ENCODE measurements at regions of chr3 and their contacts with region 1.

Region 1: GRCh38 chr3:187679638-187680396 is 9.6 kb upstream of the SST start:
- DNase-seq: no peak
- ATAC-seq: peak; percentile 97
- H3K4me3 ChIP-seq: no peak overlapping the region
- H3K27ac ChIP-seq: no peak overlapping the region
- H3K4me1 ChIP-seq: no peaks in the 10 kb centered on the region
- H3K27me3 ChIP-seq: no peaks in the 10 kb centered on the region
- CTCF ChIP-seq: peak; percentile 84 to 94 (median 89)
- EP300 ChIP-seq: no peak
- POLR2A ChIP-seq: no peak
- RAD21 ChIP-seq: peak; percentile 91

Region 2: DNA sequence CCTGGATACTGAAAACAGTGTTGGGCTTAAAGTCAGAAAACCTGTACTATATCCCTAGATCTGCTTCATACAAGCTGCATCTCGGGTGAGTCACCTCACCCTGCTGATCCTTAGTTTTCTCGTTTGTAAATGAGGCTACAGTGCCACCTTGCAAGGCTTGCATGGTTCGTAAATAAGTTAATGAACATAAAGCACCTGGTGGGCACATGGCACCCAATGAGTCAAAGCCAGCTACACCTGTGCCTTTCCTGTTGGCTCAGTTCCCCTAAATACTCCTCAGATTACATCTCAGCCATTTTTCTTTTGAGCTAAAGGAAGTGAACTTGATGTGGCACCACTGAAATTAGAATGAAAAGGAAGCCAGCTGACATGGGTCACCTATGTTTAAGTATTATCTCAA is 456.0 kb before region 1 on chr3:
- CTCF ChIA-PET with region 1: interaction called, 41 read pairs
- POLR2A ChIA-PET with region 1: no interaction called
- RAD21 ChIA-PET with region 1: interaction called, 18 read pairs
- SMC1A ChIA-PET with region 1: interaction called, 9 read pairs
- in situ Hi-C with region 1: no loop called
- intact Hi-C with region 1: loop called (anchors 1 kb)
- DNase-seq: no peak
- ATAC-seq: no peak
- H3K4me3 ChIP-seq: no peak overlapping the region
- H3K27ac ChIP-seq: no peak overlapping the region
- H3K4me1 ChIP-seq: no peaks in the 10 kb centered on the region
- H3K27me3 ChIP-seq: peaks cover 0 to 5% of the 10 kb centered on the region in 2 experiments; a peak in 3 of 4 replicates
- CTCF ChIP-seq: no peak
- EP300 ChIP-seq: no peak
- POLR2A ChIP-seq: no peak
- RAD21 ChIP-seq: no peak

Region 3: GRCh38 chr3:187662848-187663409 is 16.9 kb before region 1 on chr3:
- CTCF ChIA-PET with region 1: interaction called, 19 read pairs
- POLR2A ChIA-PET with region 1: no interaction called
- RAD21 ChIA-PET with region 1: interaction called, 3 read pairs
- SMC1A ChIA-PET with region 1: interaction called, 20 read pairs
- in situ Hi-C with region 1: no loop called
- intact Hi-C with region 1: no loop called
- DNase-seq: no peak
- ATAC-seq: no peak
- H3K4me3 ChIP-seq: no peak overlapping the region
- H3K27ac ChIP-seq: no peak overlapping the region
- H3K4me1 ChIP-seq: no peaks in the 10 kb centered on the region
- H3K27me3 ChIP-seq: peaks cover 0 to 6% of the 10 kb centered on the region in 2 experiments; a peak in 2 of 4 replicates
- CTCF ChIP-seq: no peak
- EP300 ChIP-seq: no peak
- POLR2A ChIP-seq: no peak
- RAD21 ChIP-seq: no peak

Region 4: DNA sequence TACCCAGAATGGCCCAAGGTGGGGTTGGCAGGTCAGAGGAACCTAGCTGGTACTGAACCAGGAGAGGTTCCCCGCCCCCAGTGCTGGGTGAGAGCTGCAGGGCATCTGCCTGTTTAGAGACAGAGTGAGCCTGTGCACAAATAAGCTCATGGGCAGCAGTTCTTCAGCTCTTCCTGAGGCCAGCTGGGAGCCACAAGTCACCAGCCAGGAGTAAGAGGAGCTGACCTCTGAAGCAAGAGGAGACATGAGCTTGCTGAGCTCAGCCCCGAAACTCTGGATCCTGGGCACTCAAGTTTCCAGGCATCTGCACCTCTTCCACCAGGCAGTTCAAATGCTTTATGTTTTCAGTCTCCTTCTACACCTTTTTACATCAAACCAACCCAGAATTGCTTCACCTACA is 20.4 kb after region 1 on chr3:
- CTCF ChIA-PET with region 1: interaction called, 11 read pairs
- POLR2A ChIA-PET with region 1: no interaction called
- RAD21 ChIA-PET with region 1: interaction called, 3 read pairs
- SMC1A ChIA-PET with region 1: interaction called, 17 read pairs
- in situ Hi-C with region 1: no loop called
- intact Hi-C with region 1: no loop called
- DNase-seq: no peak
- ATAC-seq: no peak
- H3K4me3 ChIP-seq: no peak overlapping the region
- H3K27ac ChIP-seq: no peak overlapping the region
- H3K4me1 ChIP-seq: no peaks in the 10 kb centered on the region
- H3K27me3 ChIP-seq: no peaks in the 10 kb centered on the region; a peak in 1 of 4 replicates
- CTCF ChIP-seq: no peak
- EP300 ChIP-seq: no peak
- POLR2A ChIP-seq: no peak
- RAD21 ChIP-seq: no peak

Region 5: GRCh38 chr3:187714404-187714979 is 34.7 kb after region 1 on chr3:
- CTCF ChIA-PET with region 1: interaction called, 17 read pairs
- POLR2A ChIA-PET with region 1: no interaction called
- RAD21 ChIA-PET with region 1: interaction called, 3 read pairs
- SMC1A ChIA-PET with region 1: interaction called, 10 read pairs
- in situ Hi-C with region 1: no loop called
- intact Hi-C with region 1: no loop called
- DNase-seq: no peak
- ATAC-seq: peak; percentile 96
- H3K4me3 ChIP-seq: no peak overlapping the region
- H3K27ac ChIP-seq: no peak overlapping the region
- H3K4me1 ChIP-seq: no peaks in the 10 kb centered on the region
- H3K27me3 ChIP-seq: no peaks in the 10 kb centered on the region
- CTCF ChIP-seq: peak; percentile 87 to 92 (median 90); a peak in 5 of 6 replicates
- EP300 ChIP-seq: no peak
- POLR2A ChIP-seq: no peak
- RAD21 ChIP-seq: peak; percentile 96

Region 6: DNA sequence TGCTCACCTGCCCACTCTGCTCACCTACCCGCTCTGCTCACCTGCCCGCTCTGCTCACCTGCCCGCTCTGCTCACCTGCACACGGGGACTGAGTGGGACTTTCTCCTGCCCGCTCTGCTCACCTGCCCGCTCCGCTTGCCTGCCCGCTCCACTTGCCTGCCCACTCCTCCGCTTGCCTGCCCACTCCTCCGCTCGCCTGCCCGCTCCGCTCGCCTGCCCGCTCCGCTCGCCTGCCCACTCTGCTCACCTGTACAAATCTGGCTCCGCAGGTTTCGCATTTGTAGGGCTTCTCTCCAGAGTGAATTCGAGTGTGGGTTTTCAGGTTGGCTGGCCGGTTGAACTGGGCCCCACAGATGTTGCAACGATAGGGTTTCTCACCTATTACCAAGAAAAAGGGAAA is 45.4 kb after region 1 on chr3:
- CTCF ChIA-PET with region 1: no interaction called
- POLR2A ChIA-PET with region 1: no interaction called
- RAD21 ChIA-PET with region 1: no interaction called
- SMC1A ChIA-PET with region 1: no interaction called
- in situ Hi-C with region 1: no loop called
- intact Hi-C with region 1: no loop called
- DNase-seq: no peak
- ATAC-seq: no peak
- H3K4me3 ChIP-seq: no peak overlapping the region
- H3K27ac ChIP-seq: no peak overlapping the region
- H3K4me1 ChIP-seq: no peaks in the 10 kb centered on the region
- H3K27me3 ChIP-seq: peaks cover 0 to 3% of the 10 kb centered on the region in 2 experiments; a peak in 3 of 4 replicates
- CTCF ChIP-seq: no peak
- EP300 ChIP-seq: no peak
- POLR2A ChIP-seq: no peak
- RAD21 ChIP-seq: no peak

Region 7: GRCh38 chr3:187889601-187890404 is 210.0 kb after region 1 on chr3:
- CTCF ChIA-PET with region 1: no interaction called
- POLR2A ChIA-PET with region 1: no interaction called
- RAD21 ChIA-PET with region 1: no interaction called
- SMC1A ChIA-PET with region 1: no interaction called
- in situ Hi-C with region 1: no loop called
- intact Hi-C with region 1: no loop called
- DNase-seq: no peak
- ATAC-seq: peak; percentile 38; the same call in 2 of the 3 replicates
- H3K4me3 ChIP-seq: no peak overlapping the region
- H3K27ac ChIP-seq: no peak overlapping the region
- H3K4me1 ChIP-seq: peaks cover 3% of the 10 kb centered on the region; the same call in 1 of the 2 replicates
- H3K27me3 ChIP-seq: no peaks in the 10 kb centered on the region
- CTCF ChIP-seq: no peak
- EP300 ChIP-seq: no peak
- POLR2A ChIP-seq: no peak
- RAD21 ChIP-seq: no peak

Region 8: GRCh38 chr3:187913617-187914291 is 233.9 kb after region 1 on chr3:
- CTCF ChIA-PET with region 1: no interaction called
- POLR2A ChIA-PET with region 1: no interaction called
- RAD21 ChIA-PET with region 1: no interaction called
- SMC1A ChIA-PET with region 1: no interaction called
- in situ Hi-C with region 1: no loop called
- intact Hi-C with region 1: no loop called
- DNase-seq: no peak
- ATAC-seq: peak; percentile 32; the same call in 1 of the 3 replicates
- H3K4me3 ChIP-seq: no peak overlapping the region
- H3K27ac ChIP-seq: no peak overlapping the region
- H3K4me1 ChIP-seq: peaks cover 6% of the 10 kb centered on the region; the same call in 1 of the 2 replicates
- H3K27me3 ChIP-seq: peaks cover 0 to 6% of the 10 kb centered on the region in 2 experiments; a peak in 3 of 4 replicates
- CTCF ChIP-seq: no peak
- EP300 ChIP-seq: no peak
- POLR2A ChIP-seq: no peak
- RAD21 ChIP-seq: no peak